Naive thymus-derived CD4-positive, alpha-beta T cell (primary cell): ENCODE measurements at regions of chr9 and their contacts with region 1.

Region 1: DNA sequence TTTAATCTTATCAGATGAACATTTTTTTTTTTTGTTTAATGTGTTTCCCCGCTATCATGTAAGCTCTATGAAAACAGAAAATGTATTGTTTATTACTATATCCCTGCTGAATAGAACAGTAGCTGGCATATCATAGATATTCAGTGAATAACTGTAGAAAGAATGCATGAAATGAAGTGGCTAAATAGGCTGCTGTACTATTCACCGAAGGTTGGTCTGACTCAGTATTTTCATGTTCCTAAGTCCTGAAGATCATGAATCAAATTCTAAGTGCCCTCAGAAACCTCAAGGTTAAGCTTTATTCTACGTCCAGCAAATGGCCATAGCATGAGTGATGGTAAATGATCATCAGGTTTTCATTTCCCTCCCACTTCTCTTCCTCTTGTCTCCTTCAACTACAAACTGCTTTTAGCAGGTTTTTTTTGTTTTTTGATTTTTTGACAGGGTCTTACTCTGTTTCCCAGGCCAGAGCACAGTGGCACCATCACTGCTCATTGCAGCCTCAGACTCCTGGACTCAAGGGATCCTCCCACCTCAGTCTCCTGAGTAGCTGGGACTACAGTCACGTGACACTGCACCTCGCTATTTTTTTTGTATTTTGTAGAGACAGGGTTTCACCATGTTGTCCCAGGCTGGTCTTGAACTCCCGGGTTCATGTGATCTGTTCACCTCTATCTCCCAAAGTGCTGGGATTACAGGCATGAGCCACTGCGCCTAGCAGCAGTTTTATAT is 19.1 kb upstream of the ZFAND5 start:
- DNase-seq: no peak
- ATAC-seq: no peak
- H3K4me3 ChIP-seq: no peak overlapping the region
- H3K4me3 Mint-ChIP-seq: no peak overlapping the region
- H3K27ac ChIP-seq: no peak overlapping the region
- H3K27ac Mint-ChIP-seq: peak overlapping the region in 1 of 9 donors; percentile 6
- H3K4me1 ChIP-seq: no peaks in the 10 kb centered on the region
- H3K4me1 Mint-ChIP-seq: peaks cover 0 to 15% (median 4%) of the 10 kb centered on the region in 7 donors
- H3K27me3 ChIP-seq: no peaks in the 10 kb centered on the region
- H3K27me3 Mint-ChIP-seq: peaks cover 0 to 4% (median 0%) of the 10 kb centered on the region in 5 donors

Region 2: DNA sequence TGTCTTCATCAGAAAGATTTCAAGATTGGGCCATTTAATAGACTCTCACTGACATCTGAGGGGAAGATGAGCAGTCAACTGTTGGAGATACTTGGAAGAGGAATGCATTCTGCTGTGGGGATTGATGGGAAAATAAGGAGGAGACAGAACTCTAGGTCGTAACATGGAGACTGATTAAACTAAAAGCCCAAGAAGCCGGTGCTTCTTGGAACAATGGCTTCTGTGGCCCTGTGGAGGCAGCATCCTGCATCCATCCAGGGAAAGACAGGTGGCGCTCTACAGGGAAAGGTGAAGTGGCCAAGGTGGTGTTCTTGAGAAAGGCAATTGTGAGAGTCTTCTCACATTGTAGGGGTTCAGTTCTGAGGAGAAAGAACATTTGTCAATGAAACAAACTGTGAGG is 50.4 kb before region 1 on chr9:
- CTCF ChIA-PET with region 1: no interaction called
- POLR2A ChIA-PET with region 1: no interaction called
- intact Hi-C with region 1: no loop called
- DNase-seq: no peak
- ATAC-seq: no peak
- H3K4me3 ChIP-seq: no peak overlapping the region
- H3K4me3 Mint-ChIP-seq: no peak overlapping the region
- H3K27ac ChIP-seq: no peak overlapping the region
- H3K27ac Mint-ChIP-seq: no peak overlapping the region
- H3K4me1 ChIP-seq: no peaks in the 10 kb centered on the region
- H3K4me1 Mint-ChIP-seq: peaks cover 0 to 2% (median 0%) of the 10 kb centered on the region in 7 donors
- H3K27me3 ChIP-seq: no peaks in the 10 kb centered on the region
- H3K27me3 Mint-ChIP-seq: peaks cover 0 to 24% (median 0%) of the 10 kb centered on the region in 5 donors

Region 3: DNA sequence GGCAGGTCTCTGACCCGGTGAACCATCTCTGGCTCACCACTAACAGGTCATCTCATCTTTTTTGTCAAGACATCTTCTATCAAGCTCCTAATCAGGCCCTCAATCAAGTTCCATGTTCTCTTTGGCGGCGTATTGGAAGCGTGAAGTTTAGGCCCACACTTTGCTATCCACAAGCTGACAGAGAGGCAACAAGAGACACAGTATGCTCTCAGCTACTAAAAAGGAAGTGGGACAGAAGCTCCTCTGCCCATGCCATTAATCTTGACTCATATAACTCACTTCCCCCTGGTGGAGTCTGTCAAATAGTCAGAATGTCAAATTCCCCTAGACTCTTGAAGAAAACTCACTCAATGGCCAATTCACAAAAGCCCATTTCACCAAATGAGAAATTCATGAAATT is 59.7 kb after region 1 on chr9:
- CTCF ChIA-PET with region 1: interaction called, 3 read pairs
- POLR2A ChIA-PET with region 1: no interaction called
- intact Hi-C with region 1: loop called in 1 of 2 experiments (anchors 5 kb)
- DNase-seq: no peak
- ATAC-seq: peak; percentile 80
- H3K4me3 ChIP-seq: no peak overlapping the region
- H3K4me3 Mint-ChIP-seq: peak overlapping the region in 2 of 10 donors; percentile 45 to 58
- H3K27ac ChIP-seq: no peak overlapping the region
- H3K27ac Mint-ChIP-seq: peak overlapping the region in 3 of 9 donors; percentile 28 to 80 (median 61)
- H3K4me1 ChIP-seq: peaks cover 0 to 11% of the 10 kb centered on the region in 2 donors
- H3K4me1 Mint-ChIP-seq: peaks cover 4 to 44% (median 14%) of the 10 kb centered on the region in 7 donors
- H3K27me3 ChIP-seq: no peaks in the 10 kb centered on the region
- H3K27me3 Mint-ChIP-seq: peaks cover 0 to 2% (median 0%) of the 10 kb centered on the region in 5 donors

Region 4: DNA sequence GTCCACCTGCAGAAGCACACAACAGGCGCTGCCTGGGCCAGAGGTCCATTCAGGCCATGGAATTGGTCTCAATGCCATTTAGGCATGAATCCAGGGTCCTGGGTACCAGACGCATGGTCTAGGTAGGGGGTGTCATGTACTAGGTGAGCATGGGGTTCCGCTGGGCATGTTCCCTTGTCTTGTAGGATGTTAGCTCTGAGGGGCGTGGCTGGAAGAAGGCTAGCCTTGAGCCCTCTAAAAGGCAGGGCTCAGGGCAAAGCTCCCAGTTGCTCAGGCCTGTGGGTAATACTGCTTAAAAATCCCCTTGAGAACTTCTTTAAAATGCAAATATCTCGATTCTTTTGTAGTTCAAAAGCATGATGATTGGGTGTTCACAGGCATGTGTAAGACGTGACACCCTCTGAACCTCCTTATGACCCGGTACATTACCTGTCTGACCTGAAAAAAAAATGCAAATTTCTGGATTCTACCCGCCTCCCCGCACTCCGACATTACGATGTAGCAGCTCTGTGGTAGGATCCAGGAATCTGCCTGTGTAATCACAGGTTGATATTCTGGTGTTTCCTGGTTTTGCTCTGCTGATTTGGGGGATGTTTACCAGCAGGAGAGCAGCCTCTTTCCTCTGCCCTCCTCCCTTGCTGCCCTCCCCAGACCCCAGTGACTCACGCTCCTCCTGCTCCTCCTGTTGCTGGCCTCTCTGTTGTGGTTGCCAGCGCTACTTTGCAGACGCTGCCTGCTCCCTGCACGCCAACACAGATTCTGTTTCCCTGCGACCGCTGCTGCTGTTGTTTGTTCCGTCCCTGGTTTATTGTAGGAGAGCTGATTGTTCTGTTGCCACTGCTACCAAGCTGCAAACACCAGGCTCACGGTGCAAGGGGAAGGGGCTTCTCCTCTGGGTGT is 143.0 kb after region 1 on chr9:
- CTCF ChIA-PET with region 1: no interaction called
- POLR2A ChIA-PET with region 1: no interaction called
- intact Hi-C with region 1: no loop called
- DNase-seq: peak; percentile 24 to 81 (median 63)
- ATAC-seq: peak; percentile 90
- H3K4me3 ChIP-seq: peak overlapping the region; percentile 28
- H3K4me3 Mint-ChIP-seq: peak overlapping the region; percentile 83 to 94 (median 88)
- H3K27ac ChIP-seq: peak overlapping the region; percentile 65
- H3K27ac Mint-ChIP-seq: peak overlapping the region; percentile 85 to 98 (median 92)
- H3K4me1 ChIP-seq: peaks cover 13 to 15% of the 10 kb centered on the region in 2 donors
- H3K4me1 Mint-ChIP-seq: peaks cover 11 to 56% (median 28%) of the 10 kb centered on the region in 7 donors
- H3K27me3 ChIP-seq: no peaks in the 10 kb centered on the region
- H3K27me3 Mint-ChIP-seq: no peaks in the 10 kb centered on the region

Region 5: DNA sequence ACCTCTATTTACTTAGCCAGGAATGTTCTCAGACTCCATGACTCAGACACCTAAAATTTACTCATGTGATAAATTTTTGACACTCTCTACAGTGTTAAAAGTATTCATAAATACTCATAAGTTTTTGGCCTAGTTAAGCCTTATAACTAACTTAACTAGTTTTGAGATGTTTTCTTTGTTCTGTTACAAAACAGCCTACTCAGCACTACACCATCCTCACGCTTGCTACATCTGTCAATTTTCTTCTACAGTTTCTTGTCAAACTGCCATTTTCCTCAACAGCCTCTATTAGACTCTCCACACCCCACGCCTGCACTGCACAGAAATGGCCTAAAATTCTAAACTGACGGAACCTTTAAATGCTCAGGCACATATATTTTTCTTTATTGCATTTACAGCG is 963.0 kb after region 1 on chr9:
- CTCF ChIA-PET with region 1: no interaction called
- POLR2A ChIA-PET with region 1: no interaction called
- intact Hi-C with region 1: no loop called
- DNase-seq: no peak
- ATAC-seq: no peak
- H3K4me3 ChIP-seq: no peak overlapping the region
- H3K4me3 Mint-ChIP-seq: no peak overlapping the region
- H3K27ac ChIP-seq: no peak overlapping the region
- H3K27ac Mint-ChIP-seq: no peak overlapping the region
- H3K4me1 ChIP-seq: no peaks in the 10 kb centered on the region
- H3K4me1 Mint-ChIP-seq: no peaks in the 10 kb centered on the region
- H3K27me3 ChIP-seq: no peaks in the 10 kb centered on the region
- H3K27me3 Mint-ChIP-seq: no peaks in the 10 kb centered on the region